SK-N-SH (cell line): ENCODE measurements at regions of chr7 and their contacts with region 1.

Region 1: DNA sequence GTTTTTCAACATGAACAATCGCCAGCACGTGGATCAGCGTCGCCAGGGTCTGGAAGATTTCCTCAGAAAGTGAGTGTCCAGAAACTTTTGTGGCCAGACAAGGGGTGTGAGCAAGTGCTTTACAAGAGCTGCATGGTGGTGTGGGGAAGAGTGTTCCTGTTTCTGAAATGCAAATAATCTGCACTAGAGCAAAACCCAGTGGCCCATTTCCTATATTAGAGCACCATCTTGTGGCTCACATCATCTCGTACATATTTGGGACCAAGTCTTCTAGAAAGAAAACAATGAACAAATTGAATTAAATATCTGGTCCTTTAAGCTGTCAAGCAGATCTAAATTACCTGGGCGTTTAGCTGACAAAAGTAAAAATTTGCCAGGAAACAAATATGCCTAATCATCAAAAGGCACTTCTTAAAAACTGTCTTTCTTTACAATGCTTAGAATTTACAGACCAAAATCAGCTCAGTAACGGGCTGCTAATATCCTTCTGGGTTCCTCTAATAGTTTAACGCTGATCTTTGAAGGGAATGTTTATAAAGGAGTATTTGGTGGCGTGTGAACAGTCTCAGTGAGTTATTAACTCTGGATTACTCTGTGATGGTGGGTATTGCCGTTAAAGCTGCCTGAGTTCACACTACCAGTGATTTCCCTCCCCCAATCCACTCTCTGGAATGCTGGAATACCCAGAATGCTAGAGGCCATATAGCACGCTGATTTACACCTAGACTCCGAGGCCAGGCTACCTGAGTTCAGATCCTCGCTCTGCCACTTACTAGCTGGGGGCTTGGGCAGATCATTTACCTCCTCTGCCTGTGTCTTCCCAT is 73.6 kb downstream of the SNX10 start:
- DNase-seq: peak; percentile 60
- H3K4me3 ChIP-seq: no peak overlapping the region
- H3K27ac ChIP-seq: no peak overlapping the region
- H3K4me1 ChIP-seq: peaks cover 0 to 9% of the 10 kb centered on the region in 2 experiments; a peak in 2 of 4 replicates
- H3K27me3 ChIP-seq: peaks cover 22% of the 10 kb centered on the region; the same call in 1 of the 2 replicates
- CTCF ChIP-seq: peak; percentile 94
- EP300 ChIP-seq: no peak
- RAD21 ChIP-seq: peak; percentile 100

Region 2: DNA sequence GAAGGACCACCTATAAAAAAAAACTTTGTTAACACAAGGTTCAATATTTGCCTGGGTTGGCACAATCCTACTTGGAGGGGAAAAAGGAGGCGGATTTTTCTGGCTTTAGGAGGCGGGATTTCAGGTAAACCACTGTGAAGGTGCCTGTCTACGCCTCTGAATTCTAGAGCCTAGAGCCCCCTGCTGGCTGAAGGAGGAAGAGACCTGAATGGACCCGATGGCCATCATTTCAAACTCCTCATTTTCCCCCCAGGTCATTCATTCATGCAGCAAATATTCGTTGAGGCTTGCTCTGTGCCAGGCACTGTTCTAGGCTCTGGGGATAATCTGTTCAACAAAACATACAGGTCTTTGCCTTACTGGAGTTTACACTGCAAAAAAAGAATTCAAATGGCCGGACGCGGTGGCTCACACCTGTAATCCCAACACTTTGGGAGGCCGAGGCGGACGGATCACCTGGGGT is 303.6 kb before region 1 on chr7:
- CTCF ChIA-PET with region 1: interaction called, 26 read pairs
- POLR2A ChIA-PET with region 1: no interaction called
- DNase-seq: peak; percentile 72
- H3K4me3 ChIP-seq: peak overlapping the region in 1 of 2 experiments; percentile 33; a peak in 1 of 4 replicates
- H3K27ac ChIP-seq: no peak overlapping the region
- H3K4me1 ChIP-seq: peaks cover 0 to 5% of the 10 kb centered on the region in 2 experiments; a peak in 1 of 4 replicates
- H3K27me3 ChIP-seq: peaks cover 23% of the 10 kb centered on the region; the same call in 1 of the 2 replicates
- CTCF ChIP-seq: peak; percentile 94
- EP300 ChIP-seq: no peak
- RAD21 ChIP-seq: peak; percentile 70

Region 3: GRCh38 chr7:26318921-26319320 is 46.4 kb before region 1 on chr7:
- CTCF ChIA-PET with region 1: interaction called, 11 read pairs
- POLR2A ChIA-PET with region 1: no interaction called
- DNase-seq: no peak
- H3K4me3 ChIP-seq: no peak overlapping the region
- H3K27ac ChIP-seq: no peak overlapping the region
- H3K4me1 ChIP-seq: no peaks in the 10 kb centered on the region
- H3K27me3 ChIP-seq: no peaks in the 10 kb centered on the region
- CTCF ChIP-seq: 0 out of 2 replicates have a peak, but pooled peaks have one; percentile 10
- EP300 ChIP-seq: no peak
- RAD21 ChIP-seq: no peak

Region 4: DNA sequence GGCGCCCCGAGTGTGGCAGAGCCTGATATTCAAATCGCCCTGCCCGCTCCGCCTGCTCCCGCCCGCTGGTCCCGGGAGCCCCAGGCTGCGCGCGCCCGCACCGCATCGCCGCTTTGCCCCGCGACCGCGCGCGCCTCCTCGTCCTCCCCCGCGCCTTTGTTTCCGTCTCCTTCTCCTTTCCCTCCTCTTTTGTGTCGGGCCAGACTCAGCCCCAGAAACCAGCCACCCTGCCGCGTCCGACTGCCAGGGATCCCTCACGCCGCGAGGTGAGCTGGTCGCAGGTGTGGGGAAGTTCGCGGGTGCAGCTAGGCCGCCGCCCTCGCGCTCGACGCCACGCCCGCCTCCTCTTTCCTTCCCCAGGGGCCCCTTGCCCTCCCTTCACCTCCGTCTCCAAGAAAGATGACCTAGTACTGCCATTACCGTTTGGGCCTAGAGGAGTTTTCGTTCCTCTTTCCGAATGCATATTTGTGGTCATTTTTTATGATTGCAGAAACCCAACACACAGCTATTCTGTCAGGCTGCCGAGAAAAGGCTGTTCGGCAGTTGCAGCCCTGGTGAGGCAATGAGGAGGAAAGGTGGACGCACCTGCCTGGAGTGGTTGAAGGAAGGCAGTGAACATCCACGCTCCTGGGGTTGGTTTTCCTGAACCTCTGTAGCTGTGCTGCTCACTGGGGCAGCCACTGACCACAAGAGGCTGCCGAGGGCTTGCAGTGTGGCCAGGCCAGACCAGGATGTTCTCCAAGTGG is 33.6 kb after region 1 on chr7:
- CTCF ChIA-PET with region 1: interaction called, 38 read pairs
- POLR2A ChIA-PET with region 1: interaction called, 3 read pairs
- DNase-seq: peak; percentile 83
- H3K4me3 ChIP-seq: peak overlapping the region; percentile 58 to 63
- H3K27ac ChIP-seq: peak overlapping the region in 1 of 2 experiments; percentile 74; a peak in 2 of 4 replicates
- H3K4me1 ChIP-seq: peaks cover 0 to 21% of the 10 kb centered on the region in 2 experiments; a peak in 1 of 4 replicates
- H3K27me3 ChIP-seq: peaks cover 10% of the 10 kb centered on the region; the same call in 1 of the 2 replicates
- CTCF ChIP-seq: no peak
- EP300 ChIP-seq: no peak
- RAD21 ChIP-seq: peak; percentile 72

Region 5: DNA sequence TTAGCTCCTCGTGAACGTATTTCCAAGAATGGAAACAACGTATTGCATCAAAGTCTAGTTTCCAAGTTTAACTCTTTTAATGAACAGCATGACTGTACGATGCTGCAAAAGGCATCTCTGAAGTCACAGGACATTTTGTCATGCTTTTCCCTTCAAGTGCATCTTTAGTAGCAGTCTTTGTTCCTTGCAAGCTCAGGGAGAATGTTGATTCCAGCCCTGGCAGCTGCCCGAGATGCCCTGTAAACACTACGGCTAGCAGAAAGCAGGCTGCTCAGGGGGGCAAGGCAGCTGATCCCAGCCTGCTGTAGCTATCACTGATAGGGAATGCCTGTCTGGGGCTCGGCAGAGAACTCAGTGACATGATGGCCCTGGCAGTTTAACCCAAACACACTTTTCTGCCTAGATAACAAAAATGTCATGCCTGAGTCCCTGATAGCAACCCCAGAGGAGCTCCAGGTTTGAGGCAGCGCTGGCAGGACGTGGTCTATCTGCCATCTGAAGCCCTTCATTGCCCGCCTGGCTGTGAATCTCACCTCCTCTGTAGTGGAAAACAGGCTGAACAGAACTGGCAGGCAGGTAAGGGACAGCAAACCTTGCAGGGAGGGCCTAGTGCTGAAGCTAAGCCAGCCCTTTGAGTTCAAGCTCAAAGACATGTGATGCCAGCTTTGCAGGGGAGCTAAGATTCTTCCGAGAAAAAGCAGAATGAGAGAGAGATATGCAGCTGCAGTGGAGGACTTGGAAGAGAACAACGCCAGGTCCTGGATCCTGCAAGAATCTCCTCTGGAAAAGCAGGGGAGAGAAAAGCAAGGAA is 191.0 kb after region 1 on chr7:
- CTCF ChIA-PET with region 1: interaction called, 31 read pairs
- POLR2A ChIA-PET with region 1: no interaction called
- DNase-seq: peak; percentile 39
- H3K4me3 ChIP-seq: no peak overlapping the region
- H3K27ac ChIP-seq: no peak overlapping the region
- H3K4me1 ChIP-seq: peaks cover 0 to 10% of the 10 kb centered on the region in 2 experiments; a peak in 1 of 4 replicates
- H3K27me3 ChIP-seq: no peaks in the 10 kb centered on the region
- CTCF ChIP-seq: no peak
- EP300 ChIP-seq: no peak
- RAD21 ChIP-seq: no peak

Region 6: GRCh38 chr7:26694141-26694540 is 328.9 kb after region 1 on chr7:
- CTCF ChIA-PET with region 1: interaction called, 12 read pairs
- POLR2A ChIA-PET with region 1: no interaction called
- DNase-seq: peak; percentile 26
- H3K4me3 ChIP-seq: no peak overlapping the region
- H3K27ac ChIP-seq: no peak overlapping the region
- H3K4me1 ChIP-seq: peaks cover 0 to 9% of the 10 kb centered on the region in 2 experiments; a peak in 2 of 4 replicates
- H3K27me3 ChIP-seq: peaks cover 4% of the 10 kb centered on the region; the same call in 1 of the 2 replicates
- CTCF ChIP-seq: no peak
- EP300 ChIP-seq: no peak
- RAD21 ChIP-seq: no peak